ENCODE measurements at regions of chr16 and their contacts with region 1.

Region 1: GRCh38 chr16:2142942-2143877 is 5.2 kb upstream of the RAB26 start:
- DNase-seq: no peak
- ATAC-seq: no peak
- H3K4me3 ChIP-seq: no peak overlapping the region
- H3K4me3 Mint-ChIP-seq: no peak overlapping the region
- H3K27ac ChIP-seq: no peak overlapping the region
- H3K27ac Mint-ChIP-seq: no peak overlapping the region
- H3K4me1 ChIP-seq: peaks cover 3% of the 10 kb centered on the region
- H3K4me1 Mint-ChIP-seq: peaks cover 8% of the 10 kb centered on the region
- H3K27me3 ChIP-seq: no peaks in the 10 kb centered on the region
- H3K27me3 Mint-ChIP-seq: no peaks in the 10 kb centered on the region
- CTCF ChIP-seq: no peak

Region 2: GRCh38 chr16:1997494-1998353 is 145.5 kb before region 1 on chr16:
- CTCF ChIA-PET with region 1: interaction called, 27 read pairs
- POLR2A ChIA-PET with region 1: interaction called, 4 read pairs
- intact Hi-C with region 1: no loop called
- DNase-seq: no peak
- ATAC-seq: no peak
- H3K4me3 ChIP-seq: no peak overlapping the region
- H3K4me3 Mint-ChIP-seq: no peak overlapping the region
- H3K27ac ChIP-seq: no peak overlapping the region
- H3K27ac Mint-ChIP-seq: no peak overlapping the region
- H3K4me1 ChIP-seq: no peaks in the 10 kb centered on the region
- H3K4me1 Mint-ChIP-seq: peaks cover 5% of the 10 kb centered on the region
- H3K27me3 ChIP-seq: no peaks in the 10 kb centered on the region
- H3K27me3 Mint-ChIP-seq: no peaks in the 10 kb centered on the region
- CTCF ChIP-seq: no peak

Region 3: GRCh38 chr16:2016407-2016922 is 126.7 kb before region 1 on chr16:
- CTCF ChIA-PET with region 1: interaction called, 18 read pairs
- POLR2A ChIA-PET with region 1: no interaction called
- intact Hi-C with region 1: no loop called
- DNase-seq: peak in 3 of 9 experiments; percentile 18 to 44 (median 42)
- ATAC-seq: peak; percentile 34
- H3K4me3 ChIP-seq: no peak overlapping the region
- H3K4me3 Mint-ChIP-seq: no peak overlapping the region
- H3K27ac ChIP-seq: no peak overlapping the region
- H3K27ac Mint-ChIP-seq: no peak overlapping the region
- H3K4me1 ChIP-seq: peaks cover 12% of the 10 kb centered on the region
- H3K4me1 Mint-ChIP-seq: peaks cover 2% of the 10 kb centered on the region
- H3K27me3 ChIP-seq: peaks cover 0 to 17% of the 10 kb centered on the region in 2 experiments
- H3K27me3 Mint-ChIP-seq: peaks cover 11% of the 10 kb centered on the region
- CTCF ChIP-seq: peak; percentile 16

Region 4: GRCh38 chr16:2032285-2033056 is 110.7 kb before region 1 on chr16:
- CTCF ChIA-PET with region 1: interaction called, 10 read pairs
- POLR2A ChIA-PET with region 1: no interaction called
- intact Hi-C with region 1: no loop called
- DNase-seq: no peak
- ATAC-seq: peak; percentile 17
- H3K4me3 ChIP-seq: no peak overlapping the region
- H3K4me3 Mint-ChIP-seq: peak overlapping the region; percentile 11
- H3K27ac ChIP-seq: no peak overlapping the region
- H3K27ac Mint-ChIP-seq: no peak overlapping the region
- H3K4me1 ChIP-seq: no peaks in the 10 kb centered on the region
- H3K4me1 Mint-ChIP-seq: peaks cover 7% of the 10 kb centered on the region
- H3K27me3 ChIP-seq: no peaks in the 10 kb centered on the region
- H3K27me3 Mint-ChIP-seq: no peaks in the 10 kb centered on the region
- CTCF ChIP-seq: no peak

Region 5: DNA sequence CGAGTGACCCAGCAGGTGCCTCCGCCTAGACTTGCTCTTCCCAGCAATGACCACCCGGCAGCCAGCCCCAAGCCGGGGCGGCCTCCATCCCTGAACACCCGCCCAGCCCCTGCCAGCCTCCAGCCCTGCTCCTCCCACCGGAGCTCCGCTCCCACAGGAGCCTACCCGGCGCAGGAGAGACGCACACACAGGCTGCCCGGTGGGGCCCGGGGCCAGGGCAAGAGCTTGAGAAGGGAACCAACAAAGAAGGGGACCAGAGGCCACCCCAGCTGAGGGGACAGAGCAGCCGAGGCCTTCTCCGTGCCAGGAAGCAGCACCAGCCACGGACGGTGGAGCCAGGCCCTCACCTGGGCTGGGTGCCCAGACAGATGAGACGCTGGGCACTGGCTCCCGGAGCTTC is 21.4 kb before region 1 on chr16:
- CTCF ChIA-PET with region 1: interaction called, 11 read pairs
- POLR2A ChIA-PET with region 1: interaction called, 3 read pairs
- intact Hi-C with region 1: loop called (anchors 1 kb)
- DNase-seq: no peak
- ATAC-seq: no peak
- H3K4me3 ChIP-seq: no peak overlapping the region
- H3K4me3 Mint-ChIP-seq: no peak overlapping the region
- H3K27ac ChIP-seq: no peak overlapping the region
- H3K27ac Mint-ChIP-seq: no peak overlapping the region
- H3K4me1 ChIP-seq: no peaks in the 10 kb centered on the region
- H3K4me1 Mint-ChIP-seq: peaks cover 8% of the 10 kb centered on the region
- H3K27me3 ChIP-seq: no peaks in the 10 kb centered on the region
- H3K27me3 Mint-ChIP-seq: no peaks in the 10 kb centered on the region
- CTCF ChIP-seq: no peak

Measured in CD8-positive, alpha-beta T cell (primary cell).